ENCODE measurements at regions of chr20 and their contacts with region 1.

Region 1: GRCh38 chr20:21513881-21514540 is at the start of gene NKX2-2:
- DNase-seq: no peak
- H3K4me3 Mint-ChIP-seq: no peak within 1 kb of the TSS
- H3K27ac Mint-ChIP-seq: peak within 1 kb of the TSS; percentile 61
- H3K4me1 Mint-ChIP-seq: peaks cover 8% of the 10 kb centered on the region
- H3K27me3 Mint-ChIP-seq: peaks cover 69% of the 10 kb centered on the region
- total RNA-seq, gene NKX2-2: not detected in 2 replicates

Region 2: DNA sequence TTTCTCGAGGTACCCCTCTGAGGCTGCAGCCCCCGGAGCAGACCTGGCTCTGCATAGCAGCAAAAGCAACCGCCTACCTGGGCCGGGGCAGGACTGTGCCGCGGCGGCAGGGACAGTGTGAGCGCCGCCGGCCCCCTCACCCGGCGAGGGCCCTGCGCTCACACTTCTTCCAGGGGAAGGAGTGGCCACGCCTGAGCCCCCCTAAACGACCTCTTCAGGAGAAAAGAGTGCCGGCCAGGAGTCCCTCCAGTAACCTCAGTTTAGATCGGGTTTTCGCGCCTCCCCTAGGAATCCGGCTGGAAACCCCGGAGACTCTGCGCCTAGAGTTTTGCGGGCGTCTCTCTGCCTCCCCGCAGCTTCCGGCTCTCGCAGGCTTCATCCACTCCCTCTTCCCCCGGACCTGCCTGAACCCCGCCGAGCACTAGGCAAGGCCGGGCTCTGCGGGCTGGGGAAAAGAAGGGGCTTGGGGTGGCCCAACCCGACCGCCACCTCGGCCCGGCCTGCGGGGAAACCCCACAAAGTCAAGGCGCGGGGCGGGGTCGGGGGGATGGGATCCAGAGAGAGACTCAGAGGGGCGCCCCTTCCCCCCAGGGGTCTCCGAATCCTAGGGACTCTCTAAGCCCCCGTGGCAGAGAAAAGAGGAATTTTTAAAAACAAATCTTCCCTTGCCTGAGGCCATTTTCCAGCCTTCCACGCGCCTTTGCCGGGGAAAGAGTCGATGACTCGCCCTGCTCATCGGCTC is 408.4 kb before region 1 on chr20:
- intact Hi-C with region 1: loop called (anchors 1 kb)
- DNase-seq: no peak
- H3K4me3 Mint-ChIP-seq: no peak overlapping the region
- H3K27ac Mint-ChIP-seq: no peak overlapping the region
- H3K4me1 Mint-ChIP-seq: peaks cover 18% of the 10 kb centered on the region
- H3K27me3 Mint-ChIP-seq: peaks cover 64% of the 10 kb centered on the region